ENCODE measurements at regions of chr5 and their contacts with region 1.

Region 1: DNA sequence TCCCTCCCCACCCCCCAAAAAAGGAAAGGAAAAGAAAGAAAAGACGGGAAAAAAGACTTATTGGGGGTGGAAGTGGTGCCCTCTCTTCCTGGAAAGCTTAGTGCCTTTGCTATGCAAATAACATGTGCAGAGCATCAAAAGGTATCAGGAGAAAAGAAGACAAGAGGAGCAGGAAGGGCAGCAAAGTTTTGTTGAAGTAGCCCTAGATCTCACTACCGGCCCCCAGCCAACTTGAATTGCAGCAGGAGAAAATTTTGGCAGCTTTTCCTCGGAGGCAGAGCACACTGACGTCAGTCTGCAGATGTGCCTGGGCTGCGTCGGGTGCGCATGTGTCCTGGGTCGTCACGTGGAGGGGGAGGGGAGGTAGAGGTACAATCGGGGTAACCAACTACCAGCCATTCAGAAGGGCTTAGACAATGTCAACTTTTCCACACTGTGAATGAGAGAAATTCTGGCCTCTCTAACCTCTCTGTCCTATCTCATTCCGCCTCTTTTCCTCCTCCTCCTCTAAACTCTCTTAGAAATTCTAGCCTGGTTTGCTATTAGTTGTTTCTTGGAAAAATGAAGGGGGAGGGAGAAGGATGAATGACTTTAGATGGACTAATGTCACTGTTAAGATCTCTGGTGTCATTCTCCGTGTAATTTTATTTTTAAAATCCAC is at the start of gene ADAMTS6:
- DNase-seq: peak; percentile 89
- total RNA-seq, gene ADAMTS6: 4.3 and 4.5 TPM in 2 replicates

Region 2: DNA sequence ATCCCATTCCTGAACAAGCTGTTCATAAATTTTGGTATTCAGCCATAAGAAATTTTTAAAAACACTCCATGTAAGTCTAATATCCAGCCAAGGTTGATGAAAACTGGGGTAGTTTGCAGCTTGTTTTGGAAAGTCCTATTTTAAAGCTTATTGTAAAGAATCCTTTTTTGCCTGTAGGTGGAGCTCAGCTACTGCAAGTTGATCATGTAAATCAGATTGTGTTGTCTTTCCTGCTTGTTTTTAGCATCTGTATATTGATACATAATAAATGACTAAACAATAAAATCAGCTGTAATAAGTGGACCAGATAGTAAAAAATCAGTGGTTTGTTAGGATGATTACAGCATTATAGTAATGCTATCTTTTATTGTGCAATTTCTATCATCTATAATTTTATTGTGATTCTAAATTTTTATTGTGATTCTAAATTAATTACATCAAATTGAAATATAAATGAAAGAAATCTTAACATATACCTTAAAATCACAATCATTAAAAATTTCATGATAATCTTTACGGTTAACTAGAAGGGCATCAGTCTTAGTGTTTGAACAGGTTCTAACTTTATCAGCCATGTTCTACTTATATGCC is 670.6 kb before region 1 on chr5:
- in situ Hi-C with region 1: loop called (anchors 25 kb)
- DNase-seq: peak; percentile 72

Region 3: DNA sequence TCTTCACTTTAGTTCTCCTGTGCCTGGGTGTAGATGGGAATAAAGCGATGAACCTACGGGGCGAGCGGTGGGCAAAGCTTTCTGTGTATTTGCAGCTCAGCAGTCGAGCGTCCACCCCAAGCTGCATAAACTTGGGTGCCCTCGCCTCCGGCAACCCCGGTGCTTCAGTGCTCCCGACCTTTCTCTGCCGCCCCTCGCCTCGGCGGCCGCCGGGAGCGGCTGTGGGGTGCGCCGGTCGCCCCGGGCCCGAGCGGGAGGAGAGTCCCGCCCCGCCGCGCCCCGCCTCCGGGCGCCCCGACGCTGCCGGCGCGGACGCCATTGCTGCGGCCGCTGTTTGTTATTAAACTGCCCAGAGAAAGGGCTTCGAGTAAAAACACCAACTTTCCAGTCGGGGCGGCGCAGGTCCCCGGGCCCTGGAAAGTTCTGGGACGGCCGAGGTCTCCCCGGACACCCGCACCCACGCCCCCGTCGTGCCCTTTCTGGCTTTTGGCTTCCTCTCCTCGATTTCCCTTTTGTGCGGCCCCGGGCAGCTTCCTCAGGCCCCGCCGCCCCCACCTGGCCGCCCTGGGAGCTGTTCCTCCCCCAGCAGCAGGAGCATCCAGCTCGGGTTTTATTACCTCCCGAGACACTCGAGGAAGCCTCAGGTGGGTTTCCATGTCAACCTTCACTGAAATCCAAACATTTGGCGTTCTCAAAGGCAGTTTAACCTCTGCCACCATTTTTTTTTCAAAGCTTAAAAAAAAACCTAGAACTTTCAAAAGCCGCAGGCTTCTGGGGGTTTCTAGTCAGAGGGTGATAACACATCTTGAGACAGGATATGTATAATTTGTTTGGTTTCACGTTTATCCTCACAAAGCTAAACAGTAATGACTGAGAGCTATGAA is 378.7 kb before region 1 on chr5:
- in situ Hi-C with region 1: loop called (anchors 25 kb)
- DNase-seq: peak; percentile 30